ENCODE measurements at regions of chr12 and their contacts with region 1.

Region 1: GRCh38 chr12:94545935-94546771 is 86.5 kb upstream of the CEP83 start:
- DNase-seq: peak; percentile 43
- H3K4me3 ChIP-seq: no peak overlapping the region
- H3K27ac ChIP-seq: no peak overlapping the region
- H3K4me1 ChIP-seq: no peaks in the 10 kb centered on the region
- CTCF ChIP-seq: peak; percentile 72

Region 2: GRCh38 chr12:94500831-94501567 is 45.2 kb before region 1 on chr12:
- CTCF ChIA-PET with region 1: no interaction called
- POLR2A ChIA-PET with region 1: no interaction called
- intact Hi-C with region 1: loop called (anchors 1 kb)
- DNase-seq: no peak
- H3K4me3 ChIP-seq: no peak overlapping the region
- H3K27ac ChIP-seq: no peak overlapping the region
- H3K4me1 ChIP-seq: no peaks in the 10 kb centered on the region
- CTCF ChIP-seq: no peak

Region 3: GRCh38 chr12:95541436-95541835 is 995.3 kb after region 1 on chr12:
- CTCF ChIA-PET with region 1: no interaction called
- POLR2A ChIA-PET with region 1: interaction called, 12 read pairs
- intact Hi-C with region 1: no loop called
- DNase-seq: no peak
- H3K4me3 ChIP-seq: no peak overlapping the region
- H3K27ac ChIP-seq: no peak overlapping the region
- H3K4me1 ChIP-seq: peaks cover 2% of the 10 kb centered on the region
- CTCF ChIP-seq: no peak